Thyroid gland (tissue), 4 donors: ENCODE measurements at regions of chr16 and their contacts with region 1.

Region 1: DNA sequence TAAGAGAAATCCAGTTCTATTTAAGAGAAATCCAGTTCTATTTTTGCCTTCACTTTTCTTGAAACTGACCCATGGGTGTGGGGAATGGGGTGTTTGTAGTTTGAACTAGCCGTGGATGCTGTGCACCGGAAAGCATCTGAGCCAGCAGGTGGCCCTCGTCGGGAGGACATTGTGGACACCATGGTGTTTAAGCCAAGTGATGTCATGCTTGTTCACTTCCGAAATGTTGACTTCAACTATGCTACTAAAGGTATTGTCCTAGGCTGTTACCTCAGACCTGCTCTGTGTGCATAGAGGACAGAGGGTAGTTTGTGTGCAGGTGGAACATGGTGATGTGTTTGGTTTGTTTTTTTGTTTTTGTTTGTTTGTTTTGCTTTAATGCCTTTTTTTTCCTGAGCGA is 3.3 kb downstream of the ATXN2L start:
- DNase-seq: no peak
- H3K4me3 ChIP-seq: no peak overlapping the region
- H3K27ac ChIP-seq: no peak overlapping the region
- H3K4me1 ChIP-seq: peaks cover 15 to 19% of the 10 kb centered on the region in 2 donors
- H3K27me3 ChIP-seq: no peaks in the 10 kb centered on the region
- CTCF ChIP-seq: no peak
- POLR2A ChIP-seq: no peak

Region 2: DNA sequence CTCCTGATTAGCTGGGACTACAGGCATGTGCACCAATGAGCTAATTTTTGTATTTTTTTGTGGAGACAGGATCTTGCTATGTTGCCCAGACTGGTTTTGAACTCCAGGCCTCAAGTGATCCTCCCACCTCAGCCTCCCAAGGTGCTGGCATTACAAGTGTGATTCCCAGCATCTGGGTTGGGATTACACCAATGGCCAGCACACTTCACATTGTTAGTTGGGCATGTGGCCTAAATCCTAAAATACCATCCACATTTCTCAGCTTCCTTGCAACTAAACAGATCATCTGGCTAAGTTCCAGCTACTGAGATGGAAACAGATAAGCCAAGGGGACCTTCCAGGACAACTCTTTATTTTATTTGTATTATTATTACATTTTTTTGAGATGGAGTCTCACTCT is 89.0 kb after region 1 on chr16:
- intact Hi-C with region 1: no loop called
- DNase-seq: no peak
- H3K4me3 ChIP-seq: no peak overlapping the region
- H3K27ac ChIP-seq: no peak overlapping the region
- H3K4me1 ChIP-seq: no peaks in the 10 kb centered on the region
- H3K27me3 ChIP-seq: no peaks in the 10 kb centered on the region
- CTCF ChIP-seq: no peak
- POLR2A ChIP-seq: no peak

Region 3: DNA sequence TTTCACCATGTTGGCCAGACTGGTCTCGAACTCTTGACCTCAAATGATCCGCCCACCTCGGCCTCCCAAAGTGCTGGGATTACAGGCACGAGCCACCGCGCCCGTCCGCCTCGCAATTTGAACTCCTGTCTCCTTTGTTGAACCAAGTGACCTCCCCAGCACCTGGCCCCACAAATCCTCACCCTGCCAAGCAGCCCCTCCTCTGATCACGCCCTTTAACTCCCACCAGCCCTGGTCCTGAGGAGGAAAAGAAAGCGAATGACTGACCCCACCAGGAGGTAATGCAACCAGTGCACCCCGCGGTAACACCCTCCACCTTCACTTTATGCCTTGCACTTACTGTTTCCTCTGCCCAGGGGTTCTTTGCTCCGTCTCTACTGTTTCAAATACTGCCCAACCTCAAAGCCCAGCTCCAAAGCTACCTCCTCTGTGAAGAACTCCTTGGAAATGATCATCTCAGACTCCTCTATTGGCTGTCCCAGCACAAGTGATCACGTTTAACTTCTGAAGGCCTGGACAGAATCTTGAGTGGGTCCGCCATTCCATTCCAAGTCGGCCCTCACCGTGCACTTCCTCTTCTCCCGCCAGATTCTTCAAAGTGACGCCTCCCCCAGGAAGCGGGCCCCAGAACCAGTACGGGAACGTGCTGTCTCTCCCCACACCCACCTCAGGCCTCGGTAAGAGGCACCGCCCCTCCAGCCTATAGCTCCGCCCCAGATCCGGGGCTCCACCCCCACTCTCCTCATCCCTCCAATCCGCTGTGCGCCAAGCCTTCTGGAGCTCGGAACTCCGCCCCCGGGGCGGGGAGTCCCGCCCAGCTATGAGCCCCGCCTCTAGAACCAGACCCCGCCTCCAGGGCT is 110.0 kb after region 1 on chr16:
- intact Hi-C with region 1: no loop called
- DNase-seq: peak; percentile 50 to 55
- H3K4me3 ChIP-seq: no peak overlapping the region
- H3K27ac ChIP-seq: no peak overlapping the region
- H3K4me1 ChIP-seq: no peaks in the 10 kb centered on the region
- H3K27me3 ChIP-seq: no peaks in the 10 kb centered on the region
- CTCF ChIP-seq: no peak
- POLR2A ChIP-seq: no peak

Region 4: DNA sequence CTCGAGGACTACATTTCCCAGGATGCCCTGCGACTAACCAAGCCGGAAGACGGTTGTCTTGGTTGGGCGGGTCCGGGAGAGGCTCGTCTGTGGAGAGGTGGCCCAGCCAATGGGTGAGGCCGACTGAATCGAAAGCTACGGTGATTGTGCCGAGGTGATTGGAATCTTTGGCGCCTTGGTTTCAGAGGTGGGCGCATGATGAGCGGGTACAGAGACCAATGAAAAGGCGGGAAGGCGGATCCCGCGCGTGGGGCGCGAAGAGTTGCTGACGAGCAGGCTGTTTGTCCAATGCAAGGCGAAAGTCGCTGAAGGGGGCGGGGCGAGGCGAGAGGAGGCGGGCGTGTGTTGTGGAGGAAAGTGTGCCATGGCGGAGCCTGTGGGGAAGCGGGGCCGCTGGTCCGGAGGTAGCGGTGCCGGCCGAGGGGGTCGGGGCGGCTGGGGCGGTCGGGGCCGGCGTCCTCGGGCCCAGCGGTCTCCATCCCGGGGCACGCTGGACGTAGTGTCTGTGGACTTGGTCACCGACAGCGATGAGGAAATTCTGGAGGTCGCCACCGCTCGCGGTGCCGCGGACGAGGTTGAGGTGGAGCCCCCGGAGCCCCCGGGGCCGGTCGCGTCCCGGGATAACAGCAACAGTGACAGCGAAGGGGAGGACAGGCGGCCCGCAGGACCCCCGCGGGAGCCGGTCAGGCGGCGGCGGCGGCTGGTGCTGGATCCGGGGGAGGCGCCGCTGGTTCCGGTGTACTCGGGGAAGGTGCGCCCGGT is 124.7 kb after region 1 on chr16 and contains the start of gene NFATC2IP:
- intact Hi-C with region 1: loop called (anchors 5 kb)
- DNase-seq: peak; percentile 99 to 100
- H3K4me3 ChIP-seq: peak within 1 kb of the TSS; percentile 61 to 95 (median 81)
- H3K27ac ChIP-seq: peak within 1 kb of the TSS; percentile 45 to 66 (median 55)
- H3K4me1 ChIP-seq: peaks cover 9 to 11% of the 10 kb centered on the region in 2 donors
- H3K27me3 ChIP-seq: no peaks in the 10 kb centered on the region
- CTCF ChIP-seq: no peak
- POLR2A ChIP-seq: peak in 1 of 2 donors; percentile 72
- total RNA-seq, gene NFATC2IP: 20.5 to 33.6 (median 28.2) TPM